Left ventricle myocardium inferior (tissue), 1 donor: ENCODE measurements at regions of chr15 and their contacts with region 1.

Region 1: GRCh38 chr15:42137431-42138261 is 18.8 kb downstream of the PLA2G4F start:
- DNase-seq: no peak
- H3K4me3 ChIP-seq: no peak overlapping the region
- H3K27ac ChIP-seq: no peak overlapping the region
- H3K4me1 ChIP-seq: no peaks in the 10 kb centered on the region
- H3K27me3 ChIP-seq: no peaks in the 10 kb centered on the region
- CTCF ChIP-seq: peak; percentile 60

Region 2: GRCh38 chr15:41944313-41944940 is 193.2 kb before region 1 on chr15:
- intact Hi-C with region 1: no loop called
- DNase-seq: peak; percentile 55
- H3K4me3 ChIP-seq: peak overlapping the region; percentile 49
- H3K27ac ChIP-seq: peak overlapping the region; percentile 89
- H3K4me1 ChIP-seq: peaks cover 99% of the 10 kb centered on the region
- H3K27me3 ChIP-seq: no peaks in the 10 kb centered on the region
- CTCF ChIP-seq: no peak

Region 3: DNA sequence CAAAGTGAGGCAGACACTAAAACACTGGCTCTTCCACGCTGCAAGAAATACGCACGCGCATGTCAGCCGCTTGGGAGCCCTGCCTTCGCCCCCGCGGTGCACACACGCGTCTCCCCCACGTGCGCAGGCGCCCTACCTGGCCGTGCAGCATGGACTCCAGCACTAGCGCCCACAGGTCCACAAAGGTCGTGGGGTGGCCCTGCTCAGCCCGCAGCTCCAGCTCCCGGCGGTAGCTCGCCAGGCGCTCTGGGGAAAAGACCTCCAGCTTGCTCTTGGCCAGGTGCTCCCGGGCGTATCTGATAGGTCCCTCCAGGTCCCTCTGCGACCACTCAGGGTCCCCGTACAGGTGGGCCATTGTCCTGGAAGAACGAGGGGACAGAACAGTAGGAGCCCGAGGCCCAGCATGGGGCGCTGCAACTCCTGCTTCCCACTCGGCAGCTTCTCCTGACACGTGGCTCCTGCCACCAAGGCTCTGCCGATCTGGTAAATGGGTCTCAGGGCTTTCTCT is 58.2 kb before region 1 on chr15:
- intact Hi-C with region 1: loop called (anchors 10 kb)
- DNase-seq: no peak
- H3K4me3 ChIP-seq: no peak overlapping the region
- H3K27ac ChIP-seq: no peak overlapping the region
- H3K4me1 ChIP-seq: no peaks in the 10 kb centered on the region
- H3K27me3 ChIP-seq: peaks cover 30% of the 10 kb centered on the region
- CTCF ChIP-seq: no peak